Panc1 (cell line): ENCODE measurements at regions of chr6 and their contacts with region 1.

Region 1: DNA sequence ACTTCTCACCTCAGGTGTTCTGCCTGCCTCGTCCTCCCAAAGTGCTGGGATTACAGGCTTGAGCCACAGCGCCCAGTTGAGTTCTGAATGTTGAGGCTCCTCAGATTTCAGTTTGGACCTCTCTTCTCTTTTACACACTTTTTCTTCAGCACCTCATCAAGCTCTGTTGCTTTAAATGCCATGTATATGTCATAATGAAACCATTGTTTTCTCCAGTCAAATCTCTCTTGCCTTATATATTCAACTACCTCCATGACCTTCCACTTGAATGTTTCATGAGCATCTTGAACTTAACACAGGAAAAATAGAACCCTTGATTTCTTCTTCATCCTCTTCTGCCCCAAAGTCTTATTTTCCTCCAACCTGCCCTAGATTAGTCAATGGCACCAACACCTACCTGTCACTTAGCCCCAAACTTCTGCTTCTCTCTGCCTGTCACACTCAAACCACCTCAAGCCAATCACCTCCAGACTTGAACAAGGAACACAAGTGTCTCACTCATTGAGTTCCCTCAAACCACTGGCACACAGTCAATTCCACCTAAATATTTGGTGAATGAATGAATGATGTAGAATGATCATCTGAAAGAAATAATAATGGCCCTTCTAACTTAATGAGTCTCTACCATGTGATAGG is 161.0 kb upstream of the SGK1 start:
- DNase-seq: no peak
- ATAC-seq: no peak
- H3K4me3 ChIP-seq: no peak overlapping the region
- H3K27ac ChIP-seq: no peak overlapping the region
- H3K4me1 ChIP-seq: no peaks in the 10 kb centered on the region
- H3K27me3 ChIP-seq: no peaks in the 10 kb centered on the region
- CTCF ChIP-seq: no peak

Region 2: GRCh38 chr6:134678436-134678889 is 199.6 kb after region 1 on chr6:
- CTCF ChIA-PET with region 1: no interaction called
- POLR2A ChIA-PET with region 1: no interaction called
- in situ Hi-C with region 1: no loop called
- intact Hi-C with region 1: no loop called
- DNase-seq: no peak
- ATAC-seq: no peak
- H3K4me3 ChIP-seq: no peak overlapping the region
- H3K27ac ChIP-seq: no peak overlapping the region
- H3K4me1 ChIP-seq: no peaks in the 10 kb centered on the region
- H3K27me3 ChIP-seq: no peaks in the 10 kb centered on the region
- CTCF ChIP-seq: no peak

Region 3: GRCh38 chr6:134853111-134854055 is 374.5 kb after region 1 on chr6:
- CTCF ChIA-PET with region 1: no interaction called
- POLR2A ChIA-PET with region 1: interaction called, 14 read pairs
- in situ Hi-C with region 1: no loop called
- intact Hi-C with region 1: no loop called
- DNase-seq: peak; percentile 35
- ATAC-seq: peak; percentile 90
- H3K4me3 ChIP-seq: no peak overlapping the region
- H3K27ac ChIP-seq: no peak overlapping the region
- H3K4me1 ChIP-seq: no peaks in the 10 kb centered on the region
- H3K27me3 ChIP-seq: no peaks in the 10 kb centered on the region
- CTCF ChIP-seq: no peak

Region 4: DNA sequence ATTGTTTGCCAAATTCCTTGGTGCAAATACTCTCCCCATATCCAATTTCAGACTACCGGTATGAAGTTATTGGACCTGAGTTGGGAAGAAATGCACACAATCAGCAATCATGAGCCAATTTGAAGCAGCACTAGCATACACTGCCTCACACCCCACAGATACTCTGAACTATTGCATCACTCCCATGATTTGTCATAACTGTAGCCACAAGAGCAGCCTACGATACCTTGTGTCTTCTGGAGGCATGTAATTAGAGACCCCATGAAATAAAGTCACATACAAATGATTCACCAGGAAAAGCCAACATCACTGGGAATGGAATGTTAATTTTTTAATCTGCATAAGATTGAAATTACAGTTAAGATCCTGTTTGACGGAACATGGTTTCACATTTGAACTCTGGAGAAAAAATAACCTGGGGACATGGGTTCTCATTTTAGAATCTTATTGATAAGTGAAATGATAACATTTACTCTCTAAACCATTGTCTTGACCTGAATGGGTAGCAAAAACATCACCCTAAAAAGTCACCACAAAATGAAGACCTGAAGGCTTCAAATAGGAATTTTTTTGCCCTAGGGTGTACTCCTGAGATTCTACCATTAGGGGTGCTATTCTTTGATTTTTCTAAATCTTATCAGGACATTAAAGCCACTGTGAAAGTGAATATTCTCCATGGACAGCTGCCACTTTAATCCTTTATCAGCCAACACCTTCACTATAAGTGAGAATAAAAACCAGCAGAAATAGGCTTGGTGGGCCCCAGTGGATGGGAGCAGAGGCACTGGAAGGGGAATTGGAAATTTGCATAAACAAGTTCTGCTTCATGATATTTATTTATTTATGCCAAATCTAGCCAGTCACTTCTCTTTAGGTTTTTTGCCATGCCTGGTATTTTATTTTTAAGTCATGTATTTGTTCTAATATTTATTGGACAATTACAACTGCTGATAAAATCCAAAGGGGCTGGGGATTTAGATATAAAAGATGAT is 610.2 kb after region 1 on chr6:
- CTCF ChIA-PET with region 1: no interaction called
- POLR2A ChIA-PET with region 1: no interaction called
- in situ Hi-C with region 1: no loop called
- intact Hi-C with region 1: no loop called
- DNase-seq: no peak
- ATAC-seq: no peak
- H3K4me3 ChIP-seq: no peak overlapping the region
- H3K27ac ChIP-seq: no peak overlapping the region
- H3K4me1 ChIP-seq: no peaks in the 10 kb centered on the region
- H3K27me3 ChIP-seq: peaks cover 9% of the 10 kb centered on the region
- CTCF ChIP-seq: peak; percentile 38; the same call in 1 of the 2 replicates